ENCODE measurements at regions of chr12 and their contacts with region 1.

Region 1: GRCh38 chr12:110468212-110469048 is at the starts of genes FAM216A and GPN3:
- DNase-seq: peak; percentile 98
- H3K4me3 ChIP-seq: peak within 1 kb of the TSS; percentile 60 to 84 (median 77)
- H3K27ac ChIP-seq: peak within 1 kb of the TSS; percentile 52
- H3K4me1 ChIP-seq: peaks cover 13% of the 10 kb centered on the region
- H3K27me3 ChIP-seq: no peaks in the 10 kb centered on the region
- CTCF ChIP-seq: no peak
- POLR2A ChIP-seq: peak; percentile 64
- total RNA-seq, gene FAM216A: 7.9 and 11.7 TPM in 2 replicates
- total RNA-seq, gene GPN3: 25.0 and 29.6 TPM in 2 replicates

Region 2: GRCh38 chr12:110253176-110253575 is 215.3 kb before region 1 on chr12:
- CTCF ChIA-PET with region 1: no interaction called
- POLR2A ChIA-PET with region 1: no interaction called
- dilution Hi-C with region 1: no loop called
- intact Hi-C with region 1: no loop called
- DNase-seq: no peak
- H3K4me3 ChIP-seq: no peak overlapping the region
- H3K27ac ChIP-seq: no peak overlapping the region
- H3K4me1 ChIP-seq: no peaks in the 10 kb centered on the region
- H3K27me3 ChIP-seq: no peaks in the 10 kb centered on the region
- CTCF ChIP-seq: no peak
- POLR2A ChIP-seq: no peak

Region 3: DNA sequence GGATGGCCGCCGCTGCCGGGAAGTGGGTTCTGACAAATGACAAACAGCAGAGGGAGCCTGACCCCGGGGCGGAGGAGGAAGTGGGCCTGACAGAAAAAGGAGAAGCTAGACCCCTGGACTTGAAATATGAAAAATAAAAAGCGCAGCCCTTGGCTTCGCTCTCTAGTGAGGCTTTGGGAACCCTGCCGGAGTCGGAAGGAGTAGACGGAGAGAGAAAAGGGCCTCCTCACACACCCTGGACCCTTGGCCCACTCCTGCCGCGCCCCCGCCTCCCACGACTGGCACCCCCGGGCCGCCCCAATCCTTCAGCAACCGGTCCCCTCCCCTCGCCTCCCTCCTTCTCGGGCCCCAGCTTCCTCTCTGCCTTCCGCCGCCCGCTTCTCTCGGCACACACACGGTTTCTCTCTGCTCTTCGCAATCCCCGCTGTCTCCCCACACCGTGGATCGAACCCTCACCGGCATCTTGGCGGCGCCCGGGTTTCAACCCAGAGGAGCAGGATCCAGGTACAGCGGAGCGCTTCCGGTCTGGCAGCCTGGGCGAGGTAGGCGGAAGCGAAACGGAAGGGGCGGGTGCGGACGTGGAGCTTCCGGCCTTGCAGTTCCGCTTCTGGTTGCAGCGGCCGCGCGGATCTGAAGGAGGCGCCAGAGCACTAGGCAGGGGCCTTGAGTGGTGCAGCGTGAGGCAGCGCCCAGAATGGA is 18.5 kb before region 1 on chr12 and contains the start of gene ARPC3:
- CTCF ChIA-PET with region 1: interaction called, 34 read pairs
- POLR2A ChIA-PET with region 1: interaction called, 16 read pairs
- dilution Hi-C with region 1: no loop called
- intact Hi-C with region 1: loop called (anchors 1 kb)
- DNase-seq: peak; percentile 92
- H3K4me3 ChIP-seq: peak within 1 kb of the TSS; percentile 59 to 85 (median 83)
- H3K27ac ChIP-seq: peak within 1 kb of the TSS; percentile 89
- H3K4me1 ChIP-seq: peaks cover 5% of the 10 kb centered on the region
- H3K27me3 ChIP-seq: no peaks in the 10 kb centered on the region
- CTCF ChIP-seq: peak; percentile 87 to 89
- POLR2A ChIP-seq: peak; percentile 86
- total RNA-seq, gene ARPC3: 304 and 308 TPM in 2 replicates

Region 4: GRCh38 chr12:110543252-110543959 is 75.0 kb after region 1 on chr12:
- CTCF ChIA-PET with region 1: interaction called, 5 read pairs
- POLR2A ChIA-PET with region 1: no interaction called
- dilution Hi-C with region 1: no loop called
- intact Hi-C with region 1: loop called (anchors 2 kb)
- DNase-seq: peak; percentile 88
- H3K4me3 ChIP-seq: no peak overlapping the region
- H3K27ac ChIP-seq: peak overlapping the region; percentile 25
- H3K4me1 ChIP-seq: peaks cover 61% of the 10 kb centered on the region
- H3K27me3 ChIP-seq: no peaks in the 10 kb centered on the region
- CTCF ChIP-seq: no peak
- POLR2A ChIP-seq: peak; percentile 22

Region 5: DNA sequence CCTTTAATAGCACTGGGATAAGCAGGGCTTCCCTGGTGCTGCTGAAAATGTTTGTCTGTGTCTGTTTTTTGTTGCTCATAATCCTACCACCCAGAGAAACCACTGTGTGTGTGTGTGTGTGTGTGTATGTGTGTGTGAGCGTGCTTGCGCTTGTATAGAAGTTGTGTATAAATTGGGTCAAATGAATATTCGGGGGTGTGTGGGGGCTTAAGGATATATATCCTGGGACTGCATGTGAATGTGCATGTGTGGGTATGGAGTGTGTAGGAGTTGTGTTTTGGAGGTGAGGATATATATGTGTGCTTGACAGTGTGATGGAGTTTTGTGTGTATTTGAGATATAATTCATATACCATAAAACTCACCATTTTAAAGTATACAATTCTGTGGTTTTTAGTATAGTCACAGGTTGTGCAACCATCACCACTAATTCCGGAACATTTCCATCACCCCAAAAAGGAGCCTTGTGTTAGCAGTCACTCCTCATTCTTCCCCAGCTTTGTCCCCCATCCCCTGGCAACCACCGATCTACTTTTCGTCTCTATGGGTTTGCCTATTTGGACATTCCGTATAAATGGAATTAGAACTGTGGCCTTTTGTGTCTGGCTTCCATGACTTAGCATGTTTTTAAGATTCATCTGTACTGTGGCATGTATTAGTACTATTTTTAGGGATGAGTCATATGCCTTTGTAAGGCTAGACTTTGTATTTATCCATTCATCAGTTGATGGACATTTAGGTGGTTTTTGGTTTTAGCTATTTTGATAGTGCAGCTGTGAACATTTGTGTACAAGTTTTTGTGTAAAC is 171.1 kb after region 1 on chr12:
- CTCF ChIA-PET with region 1: no interaction called
- POLR2A ChIA-PET with region 1: no interaction called
- dilution Hi-C with region 1: no loop called
- intact Hi-C with region 1: no loop called
- DNase-seq: peak; percentile 12
- H3K4me3 ChIP-seq: no peak overlapping the region
- H3K27ac ChIP-seq: no peak overlapping the region
- H3K4me1 ChIP-seq: no peaks in the 10 kb centered on the region
- H3K27me3 ChIP-seq: no peaks in the 10 kb centered on the region
- CTCF ChIP-seq: no peak
- POLR2A ChIP-seq: no peak

Region 6: GRCh38 chr12:110698171-110698902 is 229.9 kb after region 1 on chr12:
- CTCF ChIA-PET with region 1: no interaction called
- POLR2A ChIA-PET with region 1: interaction called, 4 read pairs
- dilution Hi-C with region 1: no loop called
- intact Hi-C with region 1: loop called (anchors 2 kb)
- DNase-seq: peak; percentile 92
- H3K4me3 ChIP-seq: no peak overlapping the region
- H3K27ac ChIP-seq: peak overlapping the region; percentile 36
- H3K4me1 ChIP-seq: peaks cover 5% of the 10 kb centered on the region
- H3K27me3 ChIP-seq: no peaks in the 10 kb centered on the region
- CTCF ChIP-seq: peak; percentile 67 to 81
- POLR2A ChIP-seq: peak; percentile 24

Region 7: GRCh38 chr12:110826592-110827200 is 358.3 kb after region 1 on chr12:
- CTCF ChIA-PET with region 1: no interaction called
- POLR2A ChIA-PET with region 1: no interaction called
- dilution Hi-C with region 1: no loop called
- intact Hi-C with region 1: loop called (anchors 1 kb)
- DNase-seq: peak; percentile 74
- H3K4me3 ChIP-seq: no peak overlapping the region
- H3K27ac ChIP-seq: no peak overlapping the region
- H3K4me1 ChIP-seq: no peaks in the 10 kb centered on the region
- H3K27me3 ChIP-seq: no peaks in the 10 kb centered on the region
- CTCF ChIP-seq: peak; percentile 74 to 77
- POLR2A ChIP-seq: no peak